ENCODE measurements at regions of chr21 and their contacts with region 1.

Region 1: DNA sequence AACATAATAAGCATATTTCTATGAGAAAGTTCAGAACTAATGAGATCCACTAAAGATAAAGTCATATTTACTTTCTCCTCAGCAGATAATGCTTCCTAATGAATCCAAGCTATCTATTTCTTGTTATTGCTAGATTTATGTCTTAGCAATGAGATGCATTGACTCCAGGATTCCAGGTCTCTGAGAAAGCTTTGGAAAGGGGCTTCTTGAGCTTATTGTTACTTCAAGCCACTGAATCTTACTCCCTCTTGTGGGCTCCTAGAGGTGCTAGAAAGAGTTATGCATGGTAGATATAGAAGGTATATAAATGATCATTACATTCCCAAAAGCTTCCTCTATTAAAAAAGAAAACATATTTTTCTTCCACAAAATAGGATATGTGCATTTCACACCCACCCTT is 246.4 kb upstream of the ADAMTS5 start:
- DNase-seq: peak; percentile 14
- H3K4me3 Mint-ChIP-seq: no peak overlapping the region
- H3K27ac Mint-ChIP-seq: no peak overlapping the region
- H3K4me1 Mint-ChIP-seq: peaks cover under 1% of the 10 kb centered on the region
- H3K27me3 Mint-ChIP-seq: no peaks in the 10 kb centered on the region
- CTCF ChIP-seq: no peak

Region 2: GRCh38 chr21:27171707-27172106 is 41.6 kb before region 1 on chr21:
- CTCF ChIA-PET with region 1: interaction called, 10 read pairs
- POLR2A ChIA-PET with region 1: interaction called, 3 read pairs
- intact Hi-C with region 1: no loop called
- DNase-seq: peak; percentile 18
- H3K4me3 Mint-ChIP-seq: no peak overlapping the region
- H3K27ac Mint-ChIP-seq: peak overlapping the region; percentile 57
- H3K4me1 Mint-ChIP-seq: peaks cover 16% of the 10 kb centered on the region
- H3K27me3 Mint-ChIP-seq: no peaks in the 10 kb centered on the region
- CTCF ChIP-seq: no peak

Measured in MCF 10A (cell line).